BJ (cell line): ENCODE measurements at regions of chr3 and their contacts with region 1.

Region 1: DNA sequence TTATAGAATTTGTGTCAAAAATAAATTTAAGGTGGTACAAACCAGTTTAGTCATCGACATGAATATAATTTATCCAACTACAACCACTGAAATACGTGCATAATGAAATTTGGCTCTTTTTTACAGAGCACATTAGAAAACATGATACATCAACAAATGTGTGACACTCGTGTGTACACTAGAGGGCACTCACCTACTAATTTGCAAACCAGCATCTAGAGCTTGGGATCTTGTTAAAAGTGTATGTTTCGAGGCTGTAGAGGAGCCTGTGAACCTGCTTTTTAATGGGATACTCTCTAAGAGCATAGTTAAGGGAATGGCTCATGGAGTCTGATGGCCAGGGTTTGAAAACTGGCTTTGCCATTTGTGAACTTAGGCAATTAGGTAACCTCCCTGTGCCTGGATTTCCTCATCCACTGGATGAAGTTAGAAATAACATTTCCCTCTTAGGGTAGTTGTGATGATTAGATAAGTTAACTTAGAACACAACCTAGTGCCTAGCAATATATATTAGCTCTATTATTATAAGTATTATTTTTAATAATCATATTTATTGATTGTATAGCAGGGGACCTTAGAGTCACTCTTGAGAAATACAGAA is 8.8 kb upstream of the CPOX start:
- DNase-seq: no peak
- H3K4me3 ChIP-seq: no peak overlapping the region
- H3K27me3 ChIP-seq: peaks cover 4% of the 10 kb centered on the region
- CTCF ChIP-seq: peak; percentile 77

Region 2: DNA sequence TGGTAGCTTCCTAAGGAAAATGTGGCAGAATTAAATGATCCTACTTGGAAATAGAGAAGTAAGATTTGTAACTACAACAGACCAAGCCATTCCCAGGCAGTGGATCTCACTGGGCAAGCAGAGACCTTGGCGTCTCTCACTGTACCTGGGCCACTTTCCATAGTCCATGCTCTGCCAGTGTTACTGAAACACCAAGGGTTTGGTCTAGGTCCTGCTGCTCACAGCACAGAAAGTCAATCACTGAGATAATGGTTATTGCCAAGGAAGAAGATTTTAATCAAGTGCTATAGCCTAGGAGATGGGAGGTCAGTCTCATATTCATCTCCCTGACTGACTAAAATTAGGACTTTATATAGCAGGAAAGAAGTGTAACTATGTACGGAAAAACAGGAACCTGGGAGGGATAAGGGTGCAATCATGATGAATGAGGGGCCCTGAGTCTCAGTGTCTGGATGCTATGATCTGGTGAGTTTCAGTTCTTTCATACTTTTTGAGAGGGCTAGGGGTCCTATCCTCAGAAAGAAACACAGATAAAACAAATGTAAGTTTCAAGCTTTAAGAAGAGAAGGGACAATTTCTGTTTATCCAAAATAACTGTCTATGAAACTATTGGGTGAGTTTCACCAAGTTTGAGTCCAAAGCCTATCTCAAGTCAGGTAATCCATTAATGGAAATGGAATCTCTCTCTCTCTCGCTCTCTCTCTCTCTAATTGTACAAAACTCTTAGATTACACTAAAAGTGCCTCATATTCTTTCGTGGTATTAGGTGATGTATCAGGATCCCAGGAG is 49.8 kb before region 1 on chr3:
- CTCF ChIA-PET with region 1: no interaction called
- POLR2A ChIA-PET with region 1: no interaction called
- DNase-seq: no peak
- H3K4me3 ChIP-seq: no peak overlapping the region
- H3K27me3 ChIP-seq: peaks cover 6% of the 10 kb centered on the region; the same call in 1 of the 2 replicates
- CTCF ChIP-seq: no peak

Region 3: GRCh38 chr3:98563661-98564281 is 38.4 kb before region 1 on chr3:
- CTCF ChIA-PET with region 1: no interaction called
- POLR2A ChIA-PET with region 1: no interaction called
- DNase-seq: peak; percentile 62
- H3K4me3 ChIP-seq: no peak overlapping the region
- H3K27me3 ChIP-seq: no peaks in the 10 kb centered on the region
- CTCF ChIP-seq: no peak

Region 4: DNA sequence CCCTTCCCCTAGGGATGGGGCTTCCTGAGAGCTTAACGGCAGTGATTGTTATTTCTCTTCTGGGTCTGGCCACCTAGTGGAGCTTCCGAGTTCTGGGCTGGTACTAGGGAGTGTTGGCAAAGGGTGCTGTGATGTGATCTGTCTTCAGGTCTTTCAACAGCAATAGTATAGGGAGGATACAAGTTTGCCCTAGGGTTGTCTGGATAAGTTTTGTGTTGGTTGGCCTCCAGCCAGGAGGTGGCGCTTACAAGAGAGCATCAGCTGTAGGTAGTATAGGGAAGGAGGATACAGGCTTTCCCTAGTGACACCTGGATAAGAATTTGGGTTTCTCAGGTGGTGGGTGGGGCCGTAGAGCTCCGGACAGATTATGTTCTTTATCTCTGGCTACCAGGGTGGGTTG is 10.4 kb after region 1 on chr3:
- CTCF ChIA-PET with region 1: interaction called, 16 read pairs
- POLR2A ChIA-PET with region 1: no interaction called
- DNase-seq: no peak
- H3K4me3 ChIP-seq: no peak overlapping the region
- H3K27me3 ChIP-seq: no peaks in the 10 kb centered on the region
- CTCF ChIP-seq: no peak

Region 5: GRCh38 chr3:98994128-98994762 is 392.1 kb after region 1 on chr3:
- CTCF ChIA-PET with region 1: interaction called, 34 read pairs
- POLR2A ChIA-PET with region 1: no interaction called
- DNase-seq: no peak
- H3K4me3 ChIP-seq: no peak overlapping the region
- H3K27me3 ChIP-seq: no peaks in the 10 kb centered on the region
- CTCF ChIP-seq: peak; percentile 67